Activated T-helper 2 cell treated with anti-CD3 and anti-CD28 coated beads, Interferon-gamma antibody, Interleukin-2, Interleukin-4, amounts not matched to agents 10 μg/mL and 5 μg/mL and 100 μg/mL, durations not matched to agents 14 hours and 24 hours and 36 hours (primary cell): ENCODE measurements at regions of chr3 and their contacts with region 1.

Region 1: DNA sequence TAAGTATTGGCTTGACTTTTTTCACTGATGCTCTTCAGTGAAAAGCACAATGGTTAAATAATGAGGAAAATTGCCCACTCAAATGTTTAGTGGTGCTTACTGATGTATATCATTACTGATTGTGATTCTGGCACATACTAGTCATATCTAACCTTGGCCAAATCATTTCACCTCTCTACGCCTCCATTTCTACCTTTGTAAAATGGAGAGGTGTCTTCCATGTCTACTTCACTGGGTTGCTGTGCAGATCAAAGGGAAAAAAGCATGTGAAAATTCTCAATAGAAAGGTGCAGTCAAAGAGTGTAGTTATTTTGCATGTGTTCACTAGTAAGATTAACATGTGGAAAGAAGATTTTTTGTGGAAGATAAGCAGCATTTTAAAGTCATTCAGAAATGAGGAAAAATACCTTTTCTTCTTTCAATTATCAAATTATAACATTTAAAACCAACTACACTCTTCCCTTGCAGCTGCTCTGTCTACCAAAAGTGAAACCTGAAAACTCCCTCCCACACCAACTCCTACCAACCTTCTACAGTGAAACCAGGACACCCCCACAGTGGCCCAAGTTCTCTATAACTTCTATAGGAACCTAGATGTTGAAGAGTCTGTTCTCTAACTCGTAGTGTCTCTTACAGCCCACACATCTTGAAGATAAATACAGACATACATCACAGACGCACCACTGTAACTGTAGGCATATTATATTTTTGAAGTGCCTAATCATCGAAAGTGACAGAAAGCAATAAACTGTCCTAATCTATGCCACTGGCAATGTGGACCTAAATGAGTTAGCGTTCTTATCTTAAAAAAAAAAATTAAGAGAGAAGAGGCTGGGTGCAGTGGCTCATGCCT is 1.4 kb downstream of the CD200R1 start:
- DNase-seq: peak; percentile 34
- H3K4me3 Mint-ChIP-seq: peak overlapping the region; percentile 84
- H3K27ac Mint-ChIP-seq: peak overlapping the region; percentile 94
- H3K4me1 Mint-ChIP-seq: peaks cover 73% of the 10 kb centered on the region
- H3K27me3 Mint-ChIP-seq: no peaks in the 10 kb centered on the region

Region 2: GRCh38 chr3:112136959-112137693 is 836.4 kb before region 1 on chr3:
- intact Hi-C with region 1: loop called (anchors 5 kb)
- DNase-seq: no peak
- H3K4me3 Mint-ChIP-seq: no peak overlapping the region
- H3K27ac Mint-ChIP-seq: no peak overlapping the region
- H3K4me1 Mint-ChIP-seq: peaks cover 53% of the 10 kb centered on the region
- H3K27me3 Mint-ChIP-seq: no peaks in the 10 kb centered on the region

Region 3: DNA sequence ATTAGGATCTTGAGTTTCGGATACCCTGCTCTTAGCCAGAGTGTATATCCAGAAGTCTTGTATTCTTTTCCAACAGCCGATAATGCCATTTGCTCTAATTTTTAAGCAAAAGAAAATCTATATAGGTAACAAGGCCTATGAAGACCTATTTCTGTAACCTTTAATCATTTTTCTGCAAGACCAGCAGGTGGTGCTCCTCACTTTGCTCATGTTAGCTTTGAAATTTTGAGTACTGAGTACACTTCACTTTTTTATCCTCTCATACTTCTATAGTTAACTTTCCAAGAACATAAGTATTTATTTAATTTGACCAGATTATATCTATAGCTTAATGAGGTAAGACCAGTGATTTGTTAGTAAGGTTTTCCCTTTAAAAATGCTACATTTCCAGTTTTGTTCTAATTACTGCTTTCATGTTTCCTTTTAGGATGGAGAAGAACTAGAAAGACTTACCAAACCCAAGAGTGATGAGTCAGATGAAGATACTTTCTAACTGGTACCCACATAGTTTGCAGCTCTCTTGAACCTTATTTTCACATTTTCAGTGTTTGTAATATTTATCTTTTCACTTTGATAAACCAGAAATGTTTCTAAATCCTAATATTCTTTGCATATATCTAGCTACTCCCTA is 391.2 kb before region 1 on chr3:
- intact Hi-C with region 1: loop called (anchors 2 kb)
- DNase-seq: peak; percentile 21
- H3K4me3 Mint-ChIP-seq: no peak overlapping the region
- H3K27ac Mint-ChIP-seq: no peak overlapping the region
- H3K4me1 Mint-ChIP-seq: peaks cover 10% of the 10 kb centered on the region
- H3K27me3 Mint-ChIP-seq: no peaks in the 10 kb centered on the region

Region 4: DNA sequence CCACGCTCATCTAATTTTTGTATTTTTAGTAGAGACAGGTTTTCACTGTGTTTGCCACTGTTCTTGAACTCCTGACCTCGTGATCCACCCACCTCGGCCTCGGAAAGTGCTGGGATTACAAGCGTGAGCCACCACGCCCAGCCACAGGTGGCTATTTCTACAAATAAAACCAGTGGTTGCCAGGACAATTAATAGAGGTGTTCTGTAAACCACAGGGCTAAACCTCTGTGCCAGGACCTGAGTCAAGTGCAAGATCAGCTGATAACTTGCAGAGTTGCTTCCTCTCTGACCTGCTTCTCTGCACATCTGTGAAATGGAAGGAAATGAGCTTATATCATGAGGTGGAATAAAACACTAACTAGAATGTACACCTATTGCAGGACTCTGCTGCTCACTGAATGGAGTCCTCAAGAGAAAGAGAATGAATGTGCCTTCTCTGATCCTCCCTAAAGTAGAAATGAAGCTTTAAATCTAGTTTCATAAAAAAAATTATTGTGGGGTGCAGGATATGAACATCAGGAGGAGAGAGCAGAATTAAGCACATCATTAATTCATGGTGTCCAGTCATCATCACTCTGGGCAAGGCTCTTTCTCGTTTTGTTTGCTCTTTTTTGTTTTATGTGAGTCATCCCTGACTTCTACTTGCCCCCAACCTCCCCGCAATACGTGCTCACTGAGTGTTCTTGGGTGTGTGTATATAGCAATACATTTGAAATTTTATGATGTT is 199.5 kb before region 1 on chr3:
- intact Hi-C with region 1: loop called (anchors 1 kb)
- DNase-seq: peak; percentile 13
- H3K4me3 Mint-ChIP-seq: no peak overlapping the region
- H3K27ac Mint-ChIP-seq: no peak overlapping the region
- H3K4me1 Mint-ChIP-seq: peaks cover 37% of the 10 kb centered on the region
- H3K27me3 Mint-ChIP-seq: peaks cover 2% of the 10 kb centered on the region

Region 5: GRCh38 chr3:112958811-112959560 is 14.6 kb before region 1 on chr3:
- intact Hi-C with region 1: loop called (anchors 1 kb)
- DNase-seq: no peak
- H3K4me3 Mint-ChIP-seq: peak overlapping the region; percentile 73
- H3K27ac Mint-ChIP-seq: peak overlapping the region; percentile 72
- H3K4me1 Mint-ChIP-seq: peaks cover 22% of the 10 kb centered on the region
- H3K27me3 Mint-ChIP-seq: no peaks in the 10 kb centered on the region

Region 6: GRCh38 chr3:113005611-113006010 is 32.1 kb after region 1 on chr3:
- intact Hi-C with region 1: loop called (anchors 1 kb)
- DNase-seq: no peak
- H3K4me3 Mint-ChIP-seq: peak overlapping the region; percentile 66
- H3K27ac Mint-ChIP-seq: peak overlapping the region; percentile 84
- H3K4me1 Mint-ChIP-seq: peaks cover 66% of the 10 kb centered on the region
- H3K27me3 Mint-ChIP-seq: no peaks in the 10 kb centered on the region